T-cell (primary cell): ENCODE measurements at regions of chr19 and their contacts with region 1.

Region 1: GRCh38 chr19:57348136-57348535 is 2.9 kb upstream of the ZNF304 start:
- DNase-seq: no peak
- ATAC-seq: no peak
- H3K4me3 ChIP-seq: no peak overlapping the region
- H3K4me3 Mint-ChIP-seq: no peak overlapping the region
- H3K27ac ChIP-seq: no peak overlapping the region
- H3K27ac Mint-ChIP-seq: no peak overlapping the region
- H3K4me1 ChIP-seq: peaks cover 10 to 19% of the 10 kb centered on the region in 2 experiments
- H3K4me1 Mint-ChIP-seq: peaks cover 26 to 28% (median 27%) of the 10 kb centered on the region in 3 donors
- H3K27me3 ChIP-seq: peaks cover 0 to 7% of the 10 kb centered on the region in 2 experiments
- H3K27me3 Mint-ChIP-seq: peaks cover 0 to 11% of the 10 kb centered on the region in 2 donors

Region 2: DNA sequence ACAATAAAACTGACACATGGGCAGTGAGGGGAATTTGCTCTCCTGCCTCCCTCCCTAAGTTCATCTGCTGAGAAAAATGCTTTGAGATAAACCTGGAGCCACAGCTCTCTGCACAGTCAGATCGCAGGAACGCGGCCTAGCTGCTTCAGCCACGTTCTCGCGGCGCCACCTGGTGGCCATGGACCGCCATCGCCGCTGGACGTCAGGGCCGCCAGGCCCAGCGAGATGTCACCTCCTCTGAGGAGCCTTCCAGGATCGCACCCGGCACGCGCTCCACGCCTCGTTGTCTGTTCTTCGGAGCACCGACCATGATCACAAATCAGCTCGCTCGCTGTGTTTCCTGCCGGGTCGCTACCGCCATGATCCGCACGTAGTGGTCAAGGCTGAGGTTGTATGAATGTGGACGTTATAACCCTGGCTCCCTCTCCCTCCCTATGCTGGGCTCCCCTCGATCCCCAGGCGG is 248.9 kb before region 1 on chr19:
- CTCF ChIA-PET with region 1: no interaction called
- POLR2A ChIA-PET with region 1: no interaction called
- DNase-seq: peak in 28 of 35 experiments; percentile 3 to 51 (median 22)
- ATAC-seq: peak in 1 of 4 experiments; percentile 24
- H3K4me3 ChIP-seq: no peak overlapping the region
- H3K4me3 Mint-ChIP-seq: no peak overlapping the region
- H3K27ac ChIP-seq: no peak overlapping the region
- H3K27ac Mint-ChIP-seq: no peak overlapping the region
- H3K4me1 ChIP-seq: peaks cover 0 to 7% of the 10 kb centered on the region in 2 experiments
- H3K4me1 Mint-ChIP-seq: peaks cover 5 to 10% (median 7%) of the 10 kb centered on the region in 3 donors
- H3K27me3 ChIP-seq: peaks cover 0 to 10% of the 10 kb centered on the region in 2 experiments
- H3K27me3 Mint-ChIP-seq: peaks cover 8 to 14% of the 10 kb centered on the region in 2 donors

Region 3: GRCh38 chr19:57319869-57320179 is 28.3 kb before region 1 on chr19:
- CTCF ChIA-PET with region 1: no interaction called
- POLR2A ChIA-PET with region 1: no interaction called
- DNase-seq: no peak
- ATAC-seq: no peak
- H3K4me3 ChIP-seq: peak overlapping the region; percentile 73 to 85
- H3K4me3 Mint-ChIP-seq: peak overlapping the region; percentile 92 to 95 (median 93)
- H3K27ac ChIP-seq: peak overlapping the region; percentile 68
- H3K27ac Mint-ChIP-seq: peak overlapping the region; percentile 93 to 95
- H3K4me1 ChIP-seq: peaks cover 21 to 24% of the 10 kb centered on the region in 2 experiments
- H3K4me1 Mint-ChIP-seq: peaks cover 27 to 33% (median 32%) of the 10 kb centered on the region in 3 donors
- H3K27me3 ChIP-seq: peaks cover 0 to 16% of the 10 kb centered on the region in 2 experiments
- H3K27me3 Mint-ChIP-seq: peaks cover 26 to 31% of the 10 kb centered on the region in 2 donors

Region 4: GRCh38 chr19:57334191-57334590 is 13.9 kb before region 1 on chr19:
- CTCF ChIA-PET with region 1: no interaction called
- POLR2A ChIA-PET with region 1: interaction called in 1 of 2 experiments, 10 read pairs
- DNase-seq: no peak
- ATAC-seq: no peak
- H3K4me3 ChIP-seq: no peak overlapping the region
- H3K4me3 Mint-ChIP-seq: no peak overlapping the region
- H3K27ac ChIP-seq: no peak overlapping the region
- H3K27ac Mint-ChIP-seq: no peak overlapping the region
- H3K4me1 ChIP-seq: no peaks in the 10 kb centered on the region
- H3K4me1 Mint-ChIP-seq: no peaks in the 10 kb centered on the region
- H3K27me3 ChIP-seq: no peaks in the 10 kb centered on the region
- H3K27me3 Mint-ChIP-seq: no peaks in the 10 kb centered on the region